ENCODE measurements at regions of chr6 and their contacts with region 1.

Region 1: DNA sequence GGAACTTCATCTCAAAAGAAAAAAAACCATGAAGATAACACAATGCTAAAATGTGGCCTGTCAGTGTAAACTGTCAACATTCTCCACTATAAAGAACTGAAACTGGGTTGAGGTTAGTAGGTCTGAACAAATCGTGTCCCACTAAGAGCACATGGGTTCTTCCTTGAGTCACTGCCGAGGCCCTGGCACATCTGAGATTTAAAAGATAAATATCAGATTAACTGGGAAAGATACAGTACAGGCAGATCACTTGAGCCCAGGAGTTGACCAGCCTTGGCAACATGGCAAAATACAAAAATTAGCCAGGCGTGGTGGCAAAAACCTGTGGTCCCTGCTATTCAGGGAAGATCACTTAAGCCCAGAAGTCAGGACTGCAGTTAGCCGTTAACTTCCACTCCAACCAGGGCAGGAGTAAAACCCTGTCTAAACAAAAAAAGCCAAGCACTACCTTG is 5.6 kb downstream of the EEF1A1 start:
- H3K4me3 ChIP-seq: no peak overlapping the region
- H3K27ac ChIP-seq: no peak overlapping the region
- H3K4me1 ChIP-seq: no peaks in the 10 kb centered on the region
- CTCF ChIP-seq: no peak

Region 2: GRCh38 chr6:73461537-73462350 is 53.5 kb before region 1 on chr6 and contains the start of gene MTO1:
- CTCF ChIA-PET with region 1: no interaction called
- POLR2A ChIA-PET with region 1: interaction called, 24 read pairs
- H3K4me3 ChIP-seq: peak within 1 kb of the TSS; percentile 78
- H3K27ac ChIP-seq: peak within 1 kb of the TSS; percentile 72
- H3K4me1 ChIP-seq: no peaks in the 10 kb centered on the region
- CTCF ChIP-seq: no peak

Region 3: DNA sequence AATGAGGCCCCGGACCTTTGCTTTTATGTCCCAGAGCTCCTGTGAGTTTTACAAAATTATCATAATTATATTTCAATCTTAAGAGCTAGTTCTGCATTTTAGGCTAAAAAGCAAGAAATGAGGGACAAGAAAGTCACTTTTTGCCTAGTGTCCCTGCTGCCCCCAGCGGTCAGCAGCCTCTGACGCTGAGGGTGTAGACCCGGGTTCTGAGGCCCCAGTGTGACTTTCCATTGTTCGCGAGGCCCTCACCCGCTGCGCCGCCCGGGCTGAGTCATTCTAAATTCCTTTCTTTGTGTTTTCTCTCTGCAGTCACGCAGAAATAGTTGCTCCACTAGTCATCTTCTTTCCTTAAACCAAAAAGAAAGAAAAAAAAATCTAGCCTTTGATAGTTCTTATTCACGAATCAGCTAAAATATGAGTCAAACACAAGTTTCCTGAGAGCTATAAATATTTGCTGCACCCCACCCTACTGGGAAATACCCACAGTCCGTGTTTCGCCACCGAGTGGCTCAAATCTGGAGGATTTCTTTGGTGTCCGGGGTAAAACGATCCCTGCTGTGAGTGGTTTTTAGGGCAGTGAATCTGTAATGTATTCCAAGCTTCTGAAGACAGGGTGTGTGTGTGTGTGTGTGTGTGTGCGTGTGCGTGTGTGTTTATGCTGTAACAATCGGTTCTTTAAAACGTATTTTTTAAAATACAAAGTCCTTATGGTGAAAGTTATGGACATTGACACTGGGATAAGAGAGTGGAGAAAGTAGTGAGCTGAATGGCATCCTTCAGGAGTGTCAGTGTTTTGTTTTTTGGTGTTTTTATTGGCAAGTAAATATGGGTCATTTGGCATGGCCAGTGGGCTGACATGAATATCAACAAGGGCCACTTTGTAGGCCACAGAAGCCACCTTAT is 65.3 kb after region 1 on chr6:
- CTCF ChIA-PET with region 1: interaction called, 5 read pairs
- POLR2A ChIA-PET with region 1: interaction called, 45 read pairs
- H3K4me3 ChIP-seq: peak overlapping the region; percentile 44
- H3K27ac ChIP-seq: peak overlapping the region; percentile 72
- H3K4me1 ChIP-seq: peaks cover 8% of the 10 kb centered on the region; the same call in 1 of the 2 replicates
- CTCF ChIP-seq: peak; percentile 66

Region 4: GRCh38 chr6:73653571-73654424 is 138.6 kb after region 1 on chr6 and contains the start of gene SLC17A5:
- CTCF ChIA-PET with region 1: interaction called, 19 read pairs
- POLR2A ChIA-PET with region 1: interaction called, 88 read pairs
- H3K4me3 ChIP-seq: peak within 1 kb of the TSS; percentile 75
- H3K27ac ChIP-seq: peak within 1 kb of the TSS; percentile 96
- H3K4me1 ChIP-seq: no peaks in the 10 kb centered on the region; the same call in 1 of the 2 replicates
- CTCF ChIP-seq: no peak